GM18951 (cell line): ENCODE measurements at regions of chr5 and their contacts with region 1.

Region 1: GRCh38 chr5:143222287-143223231 is 180.9 kb downstream of the NR3C1 start:
- POLR2A ChIP-seq: no peak

Region 2: DNA sequence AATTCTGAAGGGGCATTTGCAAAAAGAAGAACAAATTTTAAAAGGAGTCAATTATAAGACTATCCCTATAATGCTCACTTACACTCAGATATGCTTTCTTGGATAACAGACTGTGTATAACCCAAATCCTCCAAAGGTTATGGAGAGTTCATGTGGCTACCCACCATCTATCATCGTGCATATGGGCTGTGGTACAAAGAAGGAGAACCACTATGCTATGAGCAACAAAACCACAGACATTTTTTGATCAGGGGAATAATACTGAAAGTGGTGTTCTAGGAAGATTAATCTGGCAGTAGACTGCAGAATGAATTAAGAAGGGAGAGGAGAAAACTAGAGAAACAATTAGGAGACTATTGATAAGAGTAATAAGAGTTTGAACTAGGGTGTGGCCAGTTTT is 164.2 kb after region 1 on chr5:
- in situ Hi-C with region 1: loop called (anchors 10 kb)
- POLR2A ChIP-seq: no peak

Region 3: DNA sequence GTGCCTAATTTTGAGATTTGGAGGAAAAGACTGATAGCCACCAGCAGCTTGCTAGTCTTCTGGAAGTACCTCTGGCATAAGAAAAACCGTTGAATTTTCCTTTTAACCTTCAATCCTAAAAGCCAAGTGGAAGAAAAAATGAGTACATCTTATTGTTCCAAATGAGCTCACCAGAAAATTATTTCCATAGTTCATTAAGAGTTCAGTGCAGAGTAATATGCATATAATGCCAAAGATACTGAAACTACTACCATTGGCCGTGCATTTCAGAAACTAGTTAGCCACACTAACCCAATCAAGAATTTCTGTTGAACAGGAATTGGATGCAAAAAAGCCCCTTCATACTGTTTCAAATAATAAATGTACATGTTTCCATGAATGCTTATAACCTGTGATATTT is 1556.0 kb after region 1 on chr5:
- in situ Hi-C with region 1: no loop called
- POLR2A ChIP-seq: no peak